Activated T-helper 1 cell treated with anti-CD3 and anti-CD28 coated beads, Interleukin-12 subunit alpha, Interleukin-12 subunit beta, Interleukin-2, Interleukin-4 antibody, amounts not matched to agents 30 ng/mL and 10 ng/mL and 1 ng/mL, durations not matched to agents 14 hours and 24 hours and 36 hours (primary cell): ENCODE measurements at regions of chr6 and their contacts with region 1.

Region 1: DNA sequence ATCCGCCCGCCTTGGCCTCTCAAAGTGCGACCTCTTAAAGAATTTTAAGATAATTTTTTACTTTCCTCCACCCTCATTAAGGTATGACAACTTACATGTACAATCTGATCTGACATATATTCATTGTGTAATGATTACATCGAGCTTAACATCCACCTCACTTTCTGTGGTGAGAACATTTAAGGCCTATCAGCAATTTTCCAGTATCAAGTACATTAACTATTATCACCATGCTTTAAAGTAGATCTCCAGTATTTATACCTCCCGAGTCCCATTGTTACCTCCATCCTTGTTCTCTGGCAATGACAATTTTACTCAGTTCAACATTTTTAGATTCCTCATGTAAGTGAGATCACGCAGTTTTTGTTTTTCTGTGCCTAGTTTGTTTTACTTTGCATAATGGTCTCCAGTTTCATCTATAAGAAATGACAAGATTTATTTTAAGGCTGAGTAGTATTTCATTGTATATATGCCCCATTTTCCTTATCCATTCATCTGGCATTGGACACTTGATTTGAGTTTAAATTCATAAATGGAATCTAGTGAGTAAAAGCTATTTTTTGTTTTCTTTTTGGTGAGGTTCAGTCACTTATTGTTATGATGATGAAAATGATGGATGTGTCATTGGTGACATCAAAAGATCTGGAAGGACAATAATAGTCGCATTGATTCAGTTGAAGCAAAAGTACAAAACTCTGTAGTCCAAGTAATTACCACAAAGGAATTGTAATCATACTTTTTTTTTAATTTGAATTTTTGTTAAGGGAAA is 87.0 kb downstream of the OR2B2 start:
- DNase-seq: no peak
- H3K4me3 Mint-ChIP-seq: peak overlapping the region; percentile 89
- H3K27ac Mint-ChIP-seq: peak overlapping the region; percentile 96
- H3K4me1 Mint-ChIP-seq: peaks cover 46% of the 10 kb centered on the region
- H3K27me3 Mint-ChIP-seq: peaks cover 3% of the 10 kb centered on the region

Region 2: DNA sequence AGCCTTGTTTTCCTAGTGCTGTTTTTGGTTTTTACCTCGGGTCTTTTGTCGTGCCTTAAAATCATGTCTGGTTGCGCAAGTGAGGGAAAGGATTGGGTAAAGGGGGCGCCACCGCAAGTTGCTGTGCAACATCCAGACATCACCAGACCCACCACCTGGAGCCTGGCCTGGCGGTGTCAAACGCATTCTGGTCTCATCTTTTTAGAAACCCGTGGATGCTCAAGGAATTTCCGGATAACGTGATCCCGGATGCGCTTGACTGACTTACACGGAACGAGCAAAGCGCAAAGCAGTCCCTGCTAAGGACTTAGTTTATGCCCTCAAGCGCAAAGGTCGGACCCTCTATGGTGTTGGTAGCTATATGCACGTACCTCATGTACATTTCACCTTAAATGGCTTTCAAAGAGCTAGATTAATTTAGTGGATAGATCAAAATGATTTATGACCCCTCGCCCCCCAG is 18.2 kb before region 1 on chr6:
- intact Hi-C with region 1: no loop called
- DNase-seq: no peak
- H3K4me3 Mint-ChIP-seq: peak overlapping the region; percentile 95
- H3K27ac Mint-ChIP-seq: peak overlapping the region; percentile 99
- H3K4me1 Mint-ChIP-seq: peaks cover 50% of the 10 kb centered on the region
- H3K27me3 Mint-ChIP-seq: no peaks in the 10 kb centered on the region

Region 3: DNA sequence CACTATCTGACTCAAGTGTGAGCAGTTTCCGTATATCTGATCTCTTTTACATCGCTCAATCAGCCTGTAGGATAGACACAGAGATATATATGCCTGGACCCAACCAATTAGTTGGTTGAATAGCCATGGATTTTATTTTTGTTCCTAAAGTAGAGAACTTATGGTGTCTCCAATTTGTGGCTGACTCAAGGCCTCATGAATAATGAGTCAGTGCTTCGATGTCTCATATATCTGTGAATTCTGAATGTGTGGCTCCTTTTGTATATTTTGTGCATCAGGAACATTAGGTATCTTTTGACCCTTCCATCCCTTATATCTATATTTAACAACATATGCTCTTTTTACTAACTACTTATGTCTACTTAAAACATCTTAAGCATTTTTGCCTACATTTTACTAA is 22.5 kb after region 1 on chr6:
- intact Hi-C with region 1: no loop called
- DNase-seq: no peak
- H3K4me3 Mint-ChIP-seq: no peak overlapping the region
- H3K27ac Mint-ChIP-seq: no peak overlapping the region
- H3K4me1 Mint-ChIP-seq: no peaks in the 10 kb centered on the region
- H3K27me3 Mint-ChIP-seq: peaks cover 26% of the 10 kb centered on the region

Region 4: GRCh38 chr6:27864906-27865849 is 40.0 kb after region 1 on chr6:
- intact Hi-C with region 1: loop called (anchors 1 kb)
- DNase-seq: peak; percentile 80
- H3K4me3 Mint-ChIP-seq: peak overlapping the region; percentile 99
- H3K27ac Mint-ChIP-seq: peak overlapping the region; percentile 99
- H3K4me1 Mint-ChIP-seq: peaks cover 71% of the 10 kb centered on the region
- H3K27me3 Mint-ChIP-seq: peaks cover 4% of the 10 kb centered on the region

Region 5: DNA sequence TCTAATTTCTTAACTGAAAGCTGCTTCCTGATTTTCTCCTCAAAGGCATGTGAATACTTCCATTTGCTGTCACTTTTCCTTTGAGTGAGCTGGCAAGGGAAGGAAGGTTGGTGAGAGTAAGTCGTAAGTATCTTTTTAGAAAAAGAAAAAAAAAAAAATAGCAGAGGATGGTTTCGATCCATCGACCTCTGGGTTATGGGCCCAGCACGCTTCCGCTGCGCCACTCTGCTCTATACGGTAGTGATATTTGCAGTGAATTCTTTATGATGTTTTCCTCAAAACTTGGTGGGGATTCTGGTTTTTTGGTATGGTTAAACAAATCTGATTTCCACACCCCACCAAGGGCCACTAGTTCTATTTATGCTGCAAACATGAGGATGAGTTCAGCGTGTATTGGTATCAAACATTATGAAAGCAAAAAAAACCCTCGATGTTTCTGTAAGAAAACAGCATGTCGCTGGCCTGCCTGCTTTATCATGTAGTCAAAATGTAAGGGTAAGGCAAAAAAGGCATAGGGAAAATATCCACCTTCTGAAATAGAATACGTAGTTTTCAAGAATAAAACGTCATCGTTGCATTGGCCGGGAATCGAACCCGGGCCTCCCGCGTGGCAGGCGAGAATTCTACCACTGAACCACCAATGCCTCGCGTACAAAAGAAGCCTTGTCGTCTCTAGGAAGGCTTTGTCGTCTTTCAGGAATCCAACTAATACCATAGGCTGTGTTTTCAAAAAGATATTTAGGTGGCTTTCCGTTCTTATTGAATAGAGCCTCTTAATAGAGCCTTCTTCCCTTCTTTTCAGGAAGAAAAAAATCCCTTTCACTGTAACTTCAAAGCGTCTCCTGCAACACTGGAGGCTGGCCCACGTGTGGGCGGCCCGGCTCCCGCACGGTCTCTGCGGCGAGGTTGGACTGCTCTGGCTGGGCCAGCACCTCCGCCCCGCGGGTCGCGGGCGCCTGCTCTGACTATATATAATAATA is 77.4 kb after region 1 on chr6:
- intact Hi-C with region 1: no loop called
- DNase-seq: peak; percentile 77
- H3K4me3 Mint-ChIP-seq: peak overlapping the region; percentile 79
- H3K27ac Mint-ChIP-seq: peak overlapping the region; percentile 95
- H3K4me1 Mint-ChIP-seq: peaks cover 24% of the 10 kb centered on the region
- H3K27me3 Mint-ChIP-seq: peaks cover 26% of the 10 kb centered on the region